Activated CD8-positive, alpha-beta memory T cell treated with anti-CD3 and anti-CD28 coated beads, Interleukin-2, amount 10 ng/mL, durations not matched to agents 7 days and 5 days (primary cell): ENCODE measurements at regions of chr11 and their contacts with region 1.

Region 1: GRCh38 chr11:72222907-72223614 is 1.5 kb upstream of the INPPL1 start:
- DNase-seq: peak; percentile 96
- ATAC-seq: peak; percentile 78
- H3K4me3 Mint-ChIP-seq: peak overlapping the region; percentile 76
- H3K27ac Mint-ChIP-seq: peak overlapping the region; percentile 76
- H3K4me1 Mint-ChIP-seq: peaks cover 33% of the 10 kb centered on the region
- H3K27me3 Mint-ChIP-seq: peaks cover 5% of the 10 kb centered on the region

Region 2: GRCh38 chr11:72061739-72062396 is 161.2 kb before region 1 on chr11:
- CTCF ChIA-PET with region 1: no interaction called
- DNase-seq: no peak
- ATAC-seq: no peak
- H3K4me3 Mint-ChIP-seq: no peak overlapping the region
- H3K27ac Mint-ChIP-seq: no peak overlapping the region
- H3K4me1 Mint-ChIP-seq: peaks cover 8% of the 10 kb centered on the region
- H3K27me3 Mint-ChIP-seq: no peaks in the 10 kb centered on the region

Region 3: DNA sequence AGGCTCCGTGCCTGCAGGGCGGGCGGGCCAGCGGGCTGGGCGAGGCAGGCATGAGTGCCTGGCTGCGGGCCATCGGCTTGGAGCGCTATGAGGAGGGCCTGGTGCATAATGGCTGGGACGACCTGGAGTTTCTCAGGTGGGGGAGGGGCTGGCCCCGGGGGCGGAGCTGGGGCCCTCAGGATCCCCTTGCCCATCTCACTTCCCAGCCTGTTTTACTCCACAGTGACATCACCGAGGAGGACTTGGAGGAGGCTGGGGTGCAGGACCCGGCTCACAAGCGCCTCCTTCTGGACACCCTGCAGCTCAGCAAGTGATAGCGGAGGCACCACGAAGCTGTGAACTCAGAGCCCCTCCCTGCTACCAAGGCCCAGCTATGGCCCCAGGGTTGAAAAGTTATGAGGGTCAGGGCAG is 15.0 kb after region 1 on chr11:
- CTCF ChIA-PET with region 1: interaction called, 21 read pairs
- DNase-seq: peak; percentile 67
- ATAC-seq: peak; percentile 57
- H3K4me3 Mint-ChIP-seq: no peak overlapping the region
- H3K27ac Mint-ChIP-seq: no peak overlapping the region
- H3K4me1 Mint-ChIP-seq: peaks cover 10% of the 10 kb centered on the region
- H3K27me3 Mint-ChIP-seq: peaks cover 38% of the 10 kb centered on the region